GM10248 (cell line): ENCODE measurements at regions of chr11 and their contacts with region 1.

Region 1: GRCh38 chr11:62340269-62340901 is 3.1 kb downstream of the ASRGL1 start:
- DNase-seq: peak; percentile 55
- CTCF ChIP-seq: peak; percentile 63

Region 2: GRCh38 chr11:62352355-62353336 is 12.3 kb after region 1 on chr11:
- CTCF ChIA-PET with region 1: interaction called, 14 read pairs
- POLR2A ChIA-PET with region 1: no interaction called
- DNase-seq: peak; percentile 39
- CTCF ChIP-seq: no peak

Region 3: DNA sequence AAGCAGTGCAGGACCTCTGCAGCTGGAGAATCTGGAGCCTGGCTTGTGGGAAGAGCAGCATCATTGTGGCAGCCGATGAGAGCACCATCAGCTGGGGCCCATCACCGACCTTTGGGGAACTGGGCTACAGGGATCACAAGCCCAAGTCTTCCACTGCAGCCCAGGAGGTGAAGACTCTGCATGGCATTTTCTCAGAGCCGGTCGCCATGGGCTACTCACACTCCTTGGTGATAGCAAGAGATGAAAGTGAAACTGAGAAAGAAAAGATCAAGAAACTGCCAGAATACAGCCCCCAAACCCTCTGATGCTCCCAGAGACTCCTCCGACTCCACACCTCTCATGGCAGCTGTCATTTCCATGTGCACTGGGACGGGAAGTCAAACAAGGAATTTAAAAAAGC is 32.5 kb after region 1 on chr11:
- CTCF ChIA-PET with region 1: interaction called, 14 read pairs
- POLR2A ChIA-PET with region 1: interaction called, 6 read pairs
- DNase-seq: no peak
- CTCF ChIP-seq: no peak